Activated CD8-positive, alpha-beta T cell treated with anti-CD3 and anti-CD28 coated beads, Interleukin-2, amount 10 ng/mL, durations not matched to agents 7 days and 5 days (primary cell): ENCODE measurements at regions of chr12 and their contacts with region 1.

Region 1: GRCh38 chr12:89461649-89462612 is 62.7 kb downstream of the GALNT4 start:
- DNase-seq: no peak
- ATAC-seq: peak; percentile 87
- H3K4me3 Mint-ChIP-seq: peak overlapping the region; percentile 76
- H3K27ac Mint-ChIP-seq: peak overlapping the region; percentile 28
- H3K4me1 Mint-ChIP-seq: peaks cover 68% of the 10 kb centered on the region
- H3K27me3 Mint-ChIP-seq: no peaks in the 10 kb centered on the region

Region 2: GRCh38 chr12:89040146-89040964 is 421.6 kb before region 1 on chr12:
- CTCF ChIA-PET with region 1: interaction called, 31 read pairs
- POLR2A ChIA-PET with region 1: no interaction called
- DNase-seq: peak; percentile 93
- ATAC-seq: peak; percentile 98
- H3K4me3 Mint-ChIP-seq: peak overlapping the region; percentile 37
- H3K27ac Mint-ChIP-seq: peak overlapping the region; percentile 91
- H3K4me1 Mint-ChIP-seq: peaks cover 67% of the 10 kb centered on the region
- H3K27me3 Mint-ChIP-seq: no peaks in the 10 kb centered on the region

Region 3: DNA sequence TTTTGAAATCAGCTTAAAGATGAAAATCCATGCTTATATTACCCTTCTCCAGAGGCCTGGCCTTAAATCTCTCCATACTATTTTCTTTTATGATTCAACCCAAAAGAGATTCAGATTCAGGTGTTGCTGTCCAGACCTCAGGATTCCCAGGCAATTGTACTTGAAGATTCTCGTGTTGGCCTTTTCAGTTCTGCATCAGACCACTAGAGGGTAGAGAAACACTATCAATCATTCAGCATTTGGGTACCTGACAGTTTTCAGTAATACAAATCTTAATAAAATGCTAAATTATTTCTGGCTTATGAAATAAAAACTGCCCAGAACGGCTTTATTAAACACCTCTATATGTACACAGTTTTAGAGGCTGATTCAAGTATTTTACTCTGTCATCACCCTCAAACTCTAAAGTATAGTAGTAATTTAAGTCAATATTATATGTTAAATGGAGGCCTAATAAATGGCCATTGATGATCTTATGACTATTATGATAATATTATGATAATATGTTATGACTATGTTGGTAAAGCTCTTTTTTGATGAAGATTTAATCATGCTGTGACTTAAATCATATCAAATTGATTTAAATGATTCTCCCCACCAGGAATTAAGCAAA is 410.8 kb before region 1 on chr12:
- CTCF ChIA-PET with region 1: interaction called, 47 read pairs
- POLR2A ChIA-PET with region 1: no interaction called
- DNase-seq: peak; percentile 55
- ATAC-seq: peak; percentile 77
- H3K4me3 Mint-ChIP-seq: no peak overlapping the region
- H3K27ac Mint-ChIP-seq: no peak overlapping the region
- H3K4me1 Mint-ChIP-seq: peaks cover 32% of the 10 kb centered on the region
- H3K27me3 Mint-ChIP-seq: no peaks in the 10 kb centered on the region

Region 4: GRCh38 chr12:89345830-89346740 is 115.8 kb before region 1 on chr12:
- CTCF ChIA-PET with region 1: interaction called, 39 read pairs
- POLR2A ChIA-PET with region 1: interaction called, 49 read pairs
- DNase-seq: peak; percentile 76
- ATAC-seq: peak; percentile 70
- H3K4me3 Mint-ChIP-seq: peak overlapping the region; percentile 98
- H3K27ac Mint-ChIP-seq: peak overlapping the region; percentile 92
- H3K4me1 Mint-ChIP-seq: peaks cover 56% of the 10 kb centered on the region
- H3K27me3 Mint-ChIP-seq: no peaks in the 10 kb centered on the region

Region 5: DNA sequence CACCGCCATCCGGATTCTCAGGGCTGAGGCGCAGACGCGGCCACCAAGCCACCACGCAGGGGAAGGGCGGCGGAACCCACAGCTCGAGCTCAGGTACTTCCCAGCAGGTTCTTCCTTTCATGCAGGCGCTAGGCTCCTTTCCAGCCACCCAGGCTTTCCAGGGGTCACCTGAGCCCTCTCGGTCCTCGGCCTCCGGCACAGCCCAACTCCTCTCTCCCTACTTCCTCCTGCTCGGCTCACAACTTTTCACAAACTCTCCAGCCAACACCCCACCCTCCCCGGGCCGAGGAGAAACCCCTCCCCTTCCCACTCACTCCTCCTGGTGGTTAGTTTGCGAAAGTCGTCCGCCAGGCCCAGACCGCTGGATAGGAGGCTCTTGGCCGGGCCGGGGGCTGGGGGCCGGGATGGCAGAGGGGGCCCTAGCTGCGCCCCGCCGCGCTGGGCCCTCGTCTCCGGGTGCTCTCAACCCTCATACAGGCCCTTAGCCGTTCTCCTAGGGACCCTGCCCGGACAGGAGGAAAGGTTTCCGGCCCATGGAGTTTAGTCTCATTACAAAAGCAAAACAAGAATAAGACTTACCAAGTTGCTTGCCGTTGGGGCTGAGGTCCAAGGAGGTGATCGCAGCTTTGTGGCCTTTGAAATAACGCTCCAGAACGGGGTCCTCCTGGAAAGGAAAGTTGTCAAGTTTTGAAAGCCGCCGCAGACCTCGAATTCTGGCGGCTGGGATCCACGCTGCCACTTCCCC is 62.8 kb after region 1 on chr12 and contains the start of gene GALNT4:
- CTCF ChIA-PET with region 1: interaction called, 180 read pairs
- POLR2A ChIA-PET with region 1: interaction called, 33 read pairs
- DNase-seq: peak; percentile 86
- ATAC-seq: peak; percentile 78
- H3K4me3 Mint-ChIP-seq: peak within 1 kb of the TSS; percentile 89
- H3K27ac Mint-ChIP-seq: peak within 1 kb of the TSS; percentile 98
- H3K4me1 Mint-ChIP-seq: peaks cover 73% of the 10 kb centered on the region
- H3K27me3 Mint-ChIP-seq: no peaks in the 10 kb centered on the region
- total RNA-seq, gene GALNT4: 15.4 to 16.6 TPM